CD8-positive, alpha-beta T cell (primary cell): ENCODE measurements at regions of chr4 and their contacts with region 1.

Region 1: GRCh38 chr4:95124906-95125504 is 367.2 kb downstream of the BMPR1B start:
- DNase-seq: peak in 1 of 9 experiments; percentile 7
- ATAC-seq: no peak
- H3K4me3 ChIP-seq: no peak overlapping the region
- H3K4me3 Mint-ChIP-seq: no peak overlapping the region
- H3K27ac ChIP-seq: no peak overlapping the region
- H3K27ac Mint-ChIP-seq: no peak overlapping the region
- H3K4me1 ChIP-seq: no peaks in the 10 kb centered on the region
- H3K4me1 Mint-ChIP-seq: no peaks in the 10 kb centered on the region
- H3K27me3 ChIP-seq: no peaks in the 10 kb centered on the region
- H3K27me3 Mint-ChIP-seq: no peaks in the 10 kb centered on the region
- CTCF ChIP-seq: no peak

Region 2: GRCh38 chr4:95142932-95143331 is 17.9 kb after region 1 on chr4:
- CTCF ChIA-PET with region 1: no interaction called
- POLR2A ChIA-PET with region 1: interaction called, 10 read pairs
- intact Hi-C with region 1: no loop called
- DNase-seq: no peak
- ATAC-seq: no peak
- H3K4me3 ChIP-seq: no peak overlapping the region
- H3K4me3 Mint-ChIP-seq: no peak overlapping the region
- H3K27ac ChIP-seq: no peak overlapping the region
- H3K27ac Mint-ChIP-seq: no peak overlapping the region
- H3K4me1 ChIP-seq: no peaks in the 10 kb centered on the region
- H3K4me1 Mint-ChIP-seq: no peaks in the 10 kb centered on the region
- H3K27me3 ChIP-seq: no peaks in the 10 kb centered on the region
- H3K27me3 Mint-ChIP-seq: peaks cover 2% of the 10 kb centered on the region
- CTCF ChIP-seq: no peak

Region 3: GRCh38 chr4:95165926-95166524 is 41.0 kb after region 1 on chr4:
- CTCF ChIA-PET with region 1: no interaction called
- POLR2A ChIA-PET with region 1: no interaction called
- intact Hi-C with region 1: no loop called
- DNase-seq: peak in 3 of 9 experiments; percentile 15 to 71 (median 57)
- ATAC-seq: peak; percentile 56
- H3K4me3 ChIP-seq: no peak overlapping the region
- H3K4me3 Mint-ChIP-seq: no peak overlapping the region
- H3K27ac ChIP-seq: no peak overlapping the region
- H3K27ac Mint-ChIP-seq: no peak overlapping the region
- H3K4me1 ChIP-seq: peaks cover 5% of the 10 kb centered on the region
- H3K4me1 Mint-ChIP-seq: peaks cover 5% of the 10 kb centered on the region
- H3K27me3 ChIP-seq: no peaks in the 10 kb centered on the region
- H3K27me3 Mint-ChIP-seq: peaks cover 3% of the 10 kb centered on the region
- CTCF ChIP-seq: peak; percentile 72